Calu3 (cell line): ENCODE measurements at regions of chr7 and their contacts with region 1.

Region 1: GRCh38 chr7:148962823-148963582 is 65.3 kb downstream of the PDIA4 start:
- DNase-seq: peak; percentile 48
- H3K4me3 Mint-ChIP-seq: peak overlapping the region; percentile 79
- H3K27ac Mint-ChIP-seq: peak overlapping the region; percentile 84
- H3K4me1 Mint-ChIP-seq: peaks cover 23% of the 10 kb centered on the region
- H3K27me3 Mint-ChIP-seq: peaks cover 9% of the 10 kb centered on the region
- CTCF ChIP-seq: peak; percentile 55

Region 2: GRCh38 chr7:148503875-148504487 is 459.0 kb before region 1 on chr7:
- CTCF ChIA-PET with region 1: no interaction called
- intact Hi-C with region 1: loop called (anchors 1 kb)
- DNase-seq: no peak
- H3K4me3 Mint-ChIP-seq: no peak overlapping the region
- H3K27ac Mint-ChIP-seq: no peak overlapping the region
- H3K4me1 Mint-ChIP-seq: peaks cover 16% of the 10 kb centered on the region
- H3K27me3 Mint-ChIP-seq: peaks cover 67% of the 10 kb centered on the region
- CTCF ChIP-seq: peak; percentile 34

Region 3: DNA sequence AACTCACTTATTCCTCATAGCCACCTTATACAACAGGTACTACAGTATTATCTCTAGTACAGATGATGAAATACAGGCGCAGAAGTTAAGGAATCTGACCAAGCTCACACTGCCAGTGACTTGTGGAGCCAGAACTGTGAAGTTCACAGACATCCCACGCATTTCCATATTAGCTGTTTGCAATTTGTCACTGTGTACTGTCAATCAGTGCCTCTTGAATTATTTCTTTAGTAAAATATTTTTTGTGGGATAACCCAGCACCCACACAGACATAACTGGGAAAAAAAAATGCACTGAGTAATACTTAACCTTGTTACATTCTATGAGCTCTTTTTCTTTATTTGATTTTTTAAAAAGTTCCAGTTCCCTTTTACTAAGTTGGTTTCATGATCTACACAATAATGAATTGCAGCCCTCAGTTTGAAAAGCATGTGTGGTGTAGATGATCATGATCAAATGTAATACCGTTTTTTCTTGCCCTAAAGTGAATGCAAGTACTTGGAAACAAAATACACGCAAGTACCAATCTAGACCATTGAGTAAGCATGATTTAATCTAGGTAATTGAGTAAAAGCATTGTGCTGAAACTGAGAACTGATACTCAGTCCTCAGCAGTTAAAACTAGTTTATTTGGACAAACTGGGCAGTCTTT is 250.2 kb before region 1 on chr7:
- CTCF ChIA-PET with region 1: no interaction called
- intact Hi-C with region 1: loop called (anchors 10 kb)
- DNase-seq: no peak
- H3K4me3 Mint-ChIP-seq: no peak overlapping the region
- H3K27ac Mint-ChIP-seq: no peak overlapping the region
- H3K4me1 Mint-ChIP-seq: peaks cover 36% of the 10 kb centered on the region
- H3K27me3 Mint-ChIP-seq: no peaks in the 10 kb centered on the region
- CTCF ChIP-seq: no peak

Region 4: GRCh38 chr7:148856891-148857290 is 106.1 kb before region 1 on chr7:
- CTCF ChIA-PET with region 1: no interaction called
- intact Hi-C with region 1: loop called (anchors 5 kb)
- DNase-seq: no peak
- H3K4me3 Mint-ChIP-seq: no peak overlapping the region
- H3K27ac Mint-ChIP-seq: no peak overlapping the region
- H3K4me1 Mint-ChIP-seq: peaks cover 9% of the 10 kb centered on the region
- H3K27me3 Mint-ChIP-seq: no peaks in the 10 kb centered on the region
- CTCF ChIP-seq: no peak

Region 5: DNA sequence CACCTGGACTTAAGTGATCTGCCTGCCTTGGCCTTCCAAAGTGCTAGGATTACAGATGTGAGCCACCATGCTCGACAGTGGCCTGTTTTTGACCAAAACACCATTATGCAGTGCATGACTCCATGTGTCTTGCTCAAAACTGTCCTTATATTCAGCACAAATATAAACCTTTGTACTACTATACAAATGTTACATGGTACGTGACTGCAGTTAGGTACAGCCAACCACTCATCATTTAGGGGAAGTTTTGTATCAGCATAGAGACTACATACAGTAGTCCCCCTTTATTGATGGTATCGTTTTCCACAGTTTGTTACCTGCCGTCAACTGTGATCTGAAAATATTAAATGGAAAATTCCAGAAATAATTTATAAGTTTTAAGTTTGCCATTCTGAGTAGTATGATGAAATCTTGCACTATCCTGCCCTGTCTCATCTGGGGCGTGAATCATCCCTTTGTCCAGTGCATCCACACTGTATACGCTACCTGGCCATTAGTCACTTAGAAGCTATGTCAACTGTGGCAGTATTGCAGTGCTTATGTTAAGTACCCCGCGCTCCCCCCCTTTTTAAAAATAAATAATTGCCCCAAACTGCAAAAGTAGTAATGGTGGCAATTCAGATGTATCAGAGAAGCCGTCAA is 209.0 kb after region 1 on chr7:
- CTCF ChIA-PET with region 1: no interaction called
- intact Hi-C with region 1: no loop called
- DNase-seq: no peak
- H3K4me3 Mint-ChIP-seq: no peak overlapping the region
- H3K27ac Mint-ChIP-seq: no peak overlapping the region
- H3K4me1 Mint-ChIP-seq: no peaks in the 10 kb centered on the region
- H3K27me3 Mint-ChIP-seq: no peaks in the 10 kb centered on the region
- CTCF ChIP-seq: no peak